Heart right ventricle (tissue), 16 donors: ENCODE measurements at regions of chr11 and their contacts with region 1.

Region 1: GRCh38 chr11:19814421-19814820 is 101.8 kb downstream of the NAV2 start:
- DNase-seq: no peak
- ATAC-seq: peak in 1 of 8 donors; percentile 28
- H3K4me3 ChIP-seq: no peak overlapping the region
- H3K27ac ChIP-seq: peak overlapping the region in 3 of 10 donors; percentile 28 to 62 (median 50)
- H3K4me1 ChIP-seq: peaks cover 0 to 70% (median 30%) of the 10 kb centered on the region in 9 donors
- H3K27me3 ChIP-seq: no peaks in the 10 kb centered on the region
- CTCF ChIP-seq: peak in 3 of 9 donors; percentile 20 to 29 (median 21)

Region 2: GRCh38 chr11:19892387-19892786 is 78.0 kb after region 1 on chr11:
- intact Hi-C with region 1: no loop called
- DNase-seq: no peak
- ATAC-seq: no peak
- H3K4me3 ChIP-seq: no peak overlapping the region
- H3K27ac ChIP-seq: no peak overlapping the region
- H3K4me1 ChIP-seq: peaks cover 0 to 24% (median 10%) of the 10 kb centered on the region in 9 donors
- H3K27me3 ChIP-seq: no peaks in the 10 kb centered on the region
- CTCF ChIP-seq: no peak

Region 3: GRCh38 chr11:19903620-19904069 is 89.2 kb after region 1 on chr11:
- intact Hi-C with region 1: loop called in 2 of 10 experiments (anchors 10 kb)
- DNase-seq: peak; percentile 37 to 72
- ATAC-seq: peak; percentile 50 to 80 (median 67)
- H3K4me3 ChIP-seq: no peak overlapping the region
- H3K27ac ChIP-seq: no peak overlapping the region
- H3K4me1 ChIP-seq: peaks cover 0 to 20% (median 4%) of the 10 kb centered on the region in 9 donors
- H3K27me3 ChIP-seq: no peaks in the 10 kb centered on the region
- CTCF ChIP-seq: peak; percentile 62 to 87 (median 82)

Region 4: GRCh38 chr11:19995131-19995530 is 180.7 kb after region 1 on chr11:
- intact Hi-C with region 1: no loop called
- DNase-seq: no peak
- ATAC-seq: peak in 6 of 8 donors; percentile 48 to 92 (median 66)
- H3K4me3 ChIP-seq: no peak overlapping the region
- H3K27ac ChIP-seq: peak overlapping the region in 9 of 10 donors; percentile 8 to 51 (median 38)
- H3K4me1 ChIP-seq: peaks cover 3 to 51% (median 21%) of the 10 kb centered on the region in 9 donors
- H3K27me3 ChIP-seq: no peaks in the 10 kb centered on the region
- CTCF ChIP-seq: no peak